ENCODE measurements at regions of chr9 and their contacts with region 1.

Region 1: DNA sequence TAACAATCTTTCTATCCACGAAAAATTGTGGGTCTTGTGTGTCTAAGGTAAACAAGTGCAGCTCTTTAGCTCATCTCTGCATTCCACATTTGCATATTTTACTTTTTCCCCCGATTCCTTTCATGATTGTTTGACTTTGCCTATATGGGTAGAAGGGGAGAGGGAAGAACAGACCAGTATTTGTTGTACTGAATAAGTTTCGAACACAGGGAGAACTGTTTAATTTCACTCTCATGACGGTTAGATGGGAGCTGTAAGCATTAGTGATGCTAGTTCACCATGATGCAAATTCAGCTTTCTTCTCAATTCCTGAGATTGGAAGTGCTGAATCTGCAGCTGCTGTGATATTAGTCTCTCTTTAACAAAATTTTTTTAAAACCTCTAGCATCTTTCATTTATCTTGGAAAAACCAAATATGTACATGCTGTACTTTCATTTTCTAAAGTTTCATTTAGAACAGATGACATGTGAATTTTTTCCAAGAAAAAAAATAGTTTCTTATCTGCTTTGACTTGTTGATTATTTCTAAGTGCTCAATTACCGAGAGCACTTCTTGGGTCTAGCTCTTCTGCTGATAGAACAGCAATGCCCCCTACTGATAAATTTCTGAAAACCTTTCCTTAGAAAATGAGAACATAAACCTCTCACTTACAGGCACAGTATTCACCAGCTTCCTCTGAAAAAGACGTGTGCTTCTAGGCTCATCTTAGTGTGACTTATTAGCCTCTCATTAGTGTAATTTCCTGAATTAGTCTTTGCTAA is 149.5 kb downstream of the BAAT start:
- DNase-seq: no peak
- ATAC-seq: peak; percentile 71
- H3K4me3 ChIP-seq: no peak overlapping the region
- H3K27ac ChIP-seq: no peak overlapping the region
- H3K4me1 ChIP-seq: no peaks in the 10 kb centered on the region
- H3K27me3 ChIP-seq: no peaks in the 10 kb centered on the region
- CTCF ChIP-seq: peak; percentile 38 to 57 (median 40); a peak in 4 of 6 replicates
- EP300 ChIP-seq: no peak
- POLR2A ChIP-seq: no peak
- RAD21 ChIP-seq: peak; percentile 61

Region 2: DNA sequence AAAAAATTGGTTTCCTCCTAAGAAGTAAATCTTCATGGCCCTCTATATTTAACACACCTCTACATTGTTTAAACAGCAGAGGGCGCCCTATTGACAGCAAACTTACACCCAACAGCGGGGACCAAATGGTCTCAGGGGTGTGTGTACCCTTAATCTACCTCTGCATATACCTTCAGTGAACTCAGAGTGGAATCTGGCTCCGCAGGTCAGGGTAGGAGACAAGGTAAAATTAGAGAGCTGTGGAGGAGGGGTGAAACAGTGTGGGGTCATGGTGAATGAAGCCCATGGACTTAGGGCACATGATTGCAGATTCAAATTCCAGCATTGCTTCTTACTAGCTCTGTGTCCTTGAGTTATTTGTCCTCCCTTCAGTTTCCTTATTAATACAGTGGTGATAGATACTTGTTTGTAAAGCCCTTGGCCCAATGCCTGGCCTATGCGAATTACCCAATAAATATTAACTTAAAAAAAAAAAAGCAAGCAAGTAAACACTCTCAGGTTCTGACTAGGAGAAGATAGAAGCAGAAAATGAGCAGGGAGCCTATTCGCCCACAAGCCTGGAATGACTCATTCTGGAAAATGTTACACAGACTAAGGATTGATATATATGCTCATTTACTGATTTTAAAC is 534.5 kb before region 1 on chr9:
- CTCF ChIA-PET with region 1: interaction called, 3 read pairs
- POLR2A ChIA-PET with region 1: no interaction called
- RAD21 ChIA-PET with region 1: no interaction called
- SMC1A ChIA-PET with region 1: interaction called, 3 read pairs
- in situ Hi-C with region 1: no loop called
- intact Hi-C with region 1: loop called (anchors 5 kb)
- DNase-seq: no peak
- ATAC-seq: peak; percentile 76
- H3K4me3 ChIP-seq: no peak overlapping the region
- H3K27ac ChIP-seq: no peak overlapping the region
- H3K4me1 ChIP-seq: no peaks in the 10 kb centered on the region
- H3K27me3 ChIP-seq: no peaks in the 10 kb centered on the region
- CTCF ChIP-seq: peak; percentile 38 to 46 (median 45); a peak in 4 of 6 replicates
- EP300 ChIP-seq: no peak
- POLR2A ChIP-seq: no peak
- RAD21 ChIP-seq: peak; percentile 28; the same call in 1 of the 2 replicates

Region 3: DNA sequence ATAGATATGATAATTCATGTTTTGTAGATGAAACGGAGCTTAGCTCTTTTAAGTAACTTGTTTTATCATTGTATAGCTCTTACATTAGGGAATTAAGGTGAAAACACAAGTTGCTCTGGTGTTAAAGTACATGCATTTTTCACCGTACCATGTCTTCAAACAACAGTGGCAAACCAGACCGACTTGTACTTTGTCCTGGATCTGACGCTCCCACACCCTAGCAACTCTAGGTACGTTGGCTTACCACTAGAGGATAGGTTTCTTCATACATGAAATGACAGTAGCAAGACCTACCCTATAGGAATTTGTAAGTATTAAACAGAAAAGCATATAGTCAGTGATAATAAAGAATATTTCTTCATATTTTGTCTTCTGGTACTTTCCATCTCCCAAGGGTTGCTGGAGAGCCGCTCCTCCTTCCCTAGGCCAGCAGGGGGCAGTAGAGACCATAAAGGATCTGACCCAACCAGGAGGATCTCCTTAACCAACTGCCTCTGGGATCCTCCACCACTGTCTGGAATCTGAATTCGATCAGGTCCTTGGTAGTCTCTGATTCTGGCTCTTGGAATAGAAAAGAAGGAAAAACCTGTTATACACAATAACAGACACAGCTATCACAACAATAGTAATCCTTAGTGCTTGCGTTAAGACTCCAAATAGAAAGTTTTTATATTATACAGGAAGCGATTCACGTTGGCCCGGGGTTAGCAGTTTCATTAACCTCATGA is 520.8 kb before region 1 on chr9:
- CTCF ChIA-PET with region 1: interaction called, 4 read pairs
- POLR2A ChIA-PET with region 1: no interaction called
- RAD21 ChIA-PET with region 1: no interaction called
- SMC1A ChIA-PET with region 1: interaction called, 14 read pairs
- in situ Hi-C with region 1: no loop called
- intact Hi-C with region 1: no loop called
- DNase-seq: no peak
- ATAC-seq: peak; percentile 84
- H3K4me3 ChIP-seq: no peak overlapping the region
- H3K27ac ChIP-seq: no peak overlapping the region
- H3K4me1 ChIP-seq: no peaks in the 10 kb centered on the region
- H3K27me3 ChIP-seq: no peaks in the 10 kb centered on the region
- CTCF ChIP-seq: peak; percentile 78 to 84 (median 81)
- EP300 ChIP-seq: no peak
- POLR2A ChIP-seq: no peak
- RAD21 ChIP-seq: peak; percentile 71

Region 4: GRCh38 chr9:101119206-101119819 is 116.0 kb before region 1 on chr9:
- CTCF ChIA-PET with region 1: interaction called, 9 read pairs
- POLR2A ChIA-PET with region 1: no interaction called
- RAD21 ChIA-PET with region 1: interaction called, 8 read pairs
- SMC1A ChIA-PET with region 1: interaction called, 7 read pairs
- in situ Hi-C with region 1: no loop called
- intact Hi-C with region 1: loop called (anchors 1 kb)
- DNase-seq: no peak
- ATAC-seq: peak; percentile 98
- H3K4me3 ChIP-seq: no peak overlapping the region
- H3K27ac ChIP-seq: no peak overlapping the region
- H3K4me1 ChIP-seq: no peaks in the 10 kb centered on the region
- H3K27me3 ChIP-seq: no peaks in the 10 kb centered on the region
- CTCF ChIP-seq: peak; percentile 72 to 83 (median 80)
- EP300 ChIP-seq: no peak
- POLR2A ChIP-seq: no peak
- RAD21 ChIP-seq: peak; percentile 66

Region 5: DNA sequence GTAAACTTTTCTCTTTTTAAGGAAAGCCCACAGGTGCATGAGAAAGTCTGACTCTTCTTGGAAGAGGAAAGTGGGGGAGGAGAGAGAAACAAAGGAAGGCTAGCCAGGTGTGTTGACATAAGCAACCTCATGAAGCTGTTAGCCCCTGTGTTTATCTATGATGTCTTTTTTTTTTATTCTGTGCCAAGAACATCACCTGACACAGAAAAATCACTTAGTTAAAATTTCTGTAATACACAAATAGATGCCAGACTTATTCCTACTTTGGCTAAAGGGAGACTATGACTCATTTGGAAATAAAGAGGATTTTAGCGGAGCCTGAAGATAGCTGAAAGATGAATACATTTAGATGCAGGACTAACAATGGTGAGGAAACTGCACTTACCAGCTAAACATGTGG is 91.2 kb after region 1 on chr9:
- CTCF ChIA-PET with region 1: no interaction called
- POLR2A ChIA-PET with region 1: no interaction called
- RAD21 ChIA-PET with region 1: no interaction called
- SMC1A ChIA-PET with region 1: no interaction called
- in situ Hi-C with region 1: no loop called
- intact Hi-C with region 1: no loop called
- DNase-seq: no peak
- ATAC-seq: no peak
- H3K4me3 ChIP-seq: no peak overlapping the region
- H3K27ac ChIP-seq: no peak overlapping the region
- H3K4me1 ChIP-seq: no peaks in the 10 kb centered on the region
- H3K27me3 ChIP-seq: no peaks in the 10 kb centered on the region
- CTCF ChIP-seq: no peak
- EP300 ChIP-seq: no peak
- POLR2A ChIP-seq: no peak
- RAD21 ChIP-seq: no peak

Region 6: DNA sequence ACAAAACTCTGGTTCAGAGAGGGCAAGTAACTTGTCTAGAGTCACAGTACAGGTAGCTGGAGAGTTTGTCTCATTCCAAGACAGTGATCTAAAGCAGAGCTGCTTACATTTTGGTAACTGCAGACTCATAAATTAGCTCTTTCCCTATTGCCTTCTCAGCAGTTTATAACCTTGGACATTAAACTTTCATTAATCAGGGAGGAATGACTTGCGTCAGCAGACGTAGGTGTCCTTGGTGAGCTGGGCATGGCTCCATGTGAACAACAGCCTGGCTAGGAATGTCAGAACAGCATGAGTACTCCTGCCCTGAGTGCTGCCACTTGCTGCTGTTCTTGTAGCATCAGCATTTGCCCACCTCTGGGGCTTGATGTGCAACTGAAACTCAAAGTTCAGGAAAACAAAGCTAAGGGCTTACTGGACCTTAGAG is 202.5 kb after region 1 on chr9:
- CTCF ChIA-PET with region 1: no interaction called
- POLR2A ChIA-PET with region 1: no interaction called
- RAD21 ChIA-PET with region 1: no interaction called
- SMC1A ChIA-PET with region 1: no interaction called
- in situ Hi-C with region 1: no loop called
- intact Hi-C with region 1: no loop called
- DNase-seq: no peak
- ATAC-seq: no peak
- H3K4me3 ChIP-seq: no peak overlapping the region
- H3K27ac ChIP-seq: no peak overlapping the region
- H3K4me1 ChIP-seq: no peaks in the 10 kb centered on the region
- H3K27me3 ChIP-seq: no peaks in the 10 kb centered on the region
- CTCF ChIP-seq: no peak
- EP300 ChIP-seq: no peak
- POLR2A ChIP-seq: no peak
- RAD21 ChIP-seq: no peak